Gastrocnemius medialis (tissue), 4 donors: ENCODE measurements at regions of chr6 and their contacts with region 1.

Region 1: DNA sequence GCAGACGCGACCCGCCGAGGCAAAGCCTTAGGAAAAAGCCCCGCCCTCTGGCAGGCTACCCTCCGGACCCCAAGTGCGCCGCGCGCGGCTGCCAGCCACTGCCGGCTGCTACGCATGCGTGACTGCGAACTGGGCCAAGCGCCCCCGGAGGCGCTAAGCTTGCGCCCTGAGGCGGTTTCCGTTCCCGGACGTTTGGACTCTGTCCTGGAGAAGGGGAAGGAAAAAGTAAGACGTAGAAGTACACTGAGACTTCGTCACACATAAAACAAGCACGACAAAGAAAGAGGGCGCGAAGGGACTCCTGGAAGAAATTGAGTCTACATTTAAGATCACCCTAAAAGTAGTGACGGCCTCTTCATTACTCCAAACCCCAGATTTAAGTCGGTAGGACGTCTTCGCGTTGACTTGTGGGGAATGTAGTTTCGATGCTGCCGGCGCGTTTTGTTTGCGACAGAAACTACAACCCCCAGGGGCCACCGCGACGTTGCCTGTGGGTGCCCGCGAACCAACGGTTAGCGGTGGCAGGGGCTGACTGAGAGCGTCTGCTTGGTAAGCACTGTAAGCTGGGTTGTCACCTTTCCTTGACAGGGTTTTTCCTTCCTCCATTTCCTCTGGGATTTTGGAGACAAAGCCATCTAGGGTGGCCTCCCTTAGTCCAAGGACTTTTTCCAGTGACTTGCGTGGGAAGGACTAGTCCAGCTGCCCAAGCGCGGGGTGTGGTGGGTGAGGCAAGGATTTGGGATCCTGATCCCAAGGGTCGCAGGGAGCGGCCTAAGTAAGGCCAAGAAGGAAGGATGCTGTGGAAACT is at the start of gene CEP57L1:
- DNase-seq: peak; percentile 96 to 97
- ATAC-seq: peak; percentile 75 to 81
- H3K4me3 ChIP-seq: peak within 1 kb of the TSS; percentile 67 to 90 (median 82)
- H3K27ac ChIP-seq: peak within 1 kb of the TSS; percentile 93 to 98 (median 96)
- H3K4me1 ChIP-seq: peaks cover 16 to 42% of the 10 kb centered on the region in 2 donors
- H3K27me3 ChIP-seq: no peaks in the 10 kb centered on the region
- CTCF ChIP-seq: peak in 1 of 5 experiments; percentile 27
- POLR2A ChIP-seq: no peak
- total RNA-seq, gene CEP57L1: 10.3 to 29.7 (median 17.5) TPM

Region 2: GRCh38 chr6:107674995-107675738 is 1420.1 kb before region 1 on chr6:
- in situ Hi-C with region 1: no loop called
- intact Hi-C with region 1: loop called (anchors 10 kb)
- DNase-seq: peak; percentile 73 to 74
- ATAC-seq: peak; percentile 86 to 93
- H3K4me3 ChIP-seq: peak overlapping the region; percentile 34 to 47 (median 38)
- H3K27ac ChIP-seq: peak overlapping the region; percentile 61 to 82 (median 76)
- H3K4me1 ChIP-seq: peaks cover 32 to 35% of the 10 kb centered on the region in 2 donors
- H3K27me3 ChIP-seq: no peaks in the 10 kb centered on the region
- CTCF ChIP-seq: peak; percentile 80 to 93 (median 90)
- POLR2A ChIP-seq: no peak

Region 3: GRCh38 chr6:108260809-108261569 is 834.2 kb before region 1 on chr6 and contains the start of gene SNX3:
- in situ Hi-C with region 1: no loop called
- intact Hi-C with region 1: loop called (anchors 10 kb)
- DNase-seq: peak; percentile 96 to 97
- ATAC-seq: peak; percentile 93 to 95
- H3K4me3 ChIP-seq: peak within 1 kb of the TSS; percentile 68 to 97 (median 90)
- H3K27ac ChIP-seq: peak within 1 kb of the TSS; percentile 96 to 99 (median 98)
- H3K4me1 ChIP-seq: peaks cover 30 to 31% of the 10 kb centered on the region in 2 donors
- H3K27me3 ChIP-seq: no peaks in the 10 kb centered on the region
- CTCF ChIP-seq: peak in 2 of 5 experiments; percentile 25 to 26
- POLR2A ChIP-seq: peak; percentile 88 to 94
- total RNA-seq, gene SNX3: 150 to 177 (median 168) TPM

Region 4: GRCh38 chr6:108655806-108656651 is 439.2 kb before region 1 on chr6:
- in situ Hi-C with region 1: loop called in 1 of 4 experiments (anchors 25 kb)
- intact Hi-C with region 1: no loop called
- DNase-seq: peak; percentile 52 to 69
- ATAC-seq: peak; percentile 37 to 60
- H3K4me3 ChIP-seq: peak overlapping the region; percentile 50 to 67 (median 62)
- H3K27ac ChIP-seq: peak overlapping the region; percentile 89 to 94 (median 92)
- H3K4me1 ChIP-seq: peaks cover 77 to 85% of the 10 kb centered on the region in 2 donors
- H3K27me3 ChIP-seq: no peaks in the 10 kb centered on the region
- CTCF ChIP-seq: no peak
- POLR2A ChIP-seq: peak; percentile 33 to 75

Region 5: GRCh38 chr6:109009236-109009961 is 85.8 kb before region 1 on chr6:
- in situ Hi-C with region 1: no loop called
- intact Hi-C with region 1: loop called (anchors 2 kb)
- DNase-seq: peak; percentile 87 to 92
- ATAC-seq: peak; percentile 85 to 86
- H3K4me3 ChIP-seq: peak overlapping the region; percentile 60 to 89 (median 78)
- H3K27ac ChIP-seq: peak overlapping the region; percentile 92 to 98 (median 95)
- H3K4me1 ChIP-seq: peaks cover 52 to 61% of the 10 kb centered on the region in 2 donors
- H3K27me3 ChIP-seq: no peaks in the 10 kb centered on the region
- CTCF ChIP-seq: peak; percentile 18 to 74 (median 53)
- POLR2A ChIP-seq: peak; percentile 82 to 97

Region 6: GRCh38 chr6:109117346-109118035 is 22.3 kb after region 1 on chr6:
- in situ Hi-C with region 1: no loop called
- intact Hi-C with region 1: no loop called
- DNase-seq: no peak
- ATAC-seq: peak in 1 of 2 donors; percentile 23
- H3K4me3 ChIP-seq: no peak overlapping the region
- H3K27ac ChIP-seq: no peak overlapping the region
- H3K4me1 ChIP-seq: peaks cover 26 to 46% of the 10 kb centered on the region in 2 donors
- H3K27me3 ChIP-seq: no peaks in the 10 kb centered on the region
- CTCF ChIP-seq: no peak
- POLR2A ChIP-seq: no peak

Region 7: DNA sequence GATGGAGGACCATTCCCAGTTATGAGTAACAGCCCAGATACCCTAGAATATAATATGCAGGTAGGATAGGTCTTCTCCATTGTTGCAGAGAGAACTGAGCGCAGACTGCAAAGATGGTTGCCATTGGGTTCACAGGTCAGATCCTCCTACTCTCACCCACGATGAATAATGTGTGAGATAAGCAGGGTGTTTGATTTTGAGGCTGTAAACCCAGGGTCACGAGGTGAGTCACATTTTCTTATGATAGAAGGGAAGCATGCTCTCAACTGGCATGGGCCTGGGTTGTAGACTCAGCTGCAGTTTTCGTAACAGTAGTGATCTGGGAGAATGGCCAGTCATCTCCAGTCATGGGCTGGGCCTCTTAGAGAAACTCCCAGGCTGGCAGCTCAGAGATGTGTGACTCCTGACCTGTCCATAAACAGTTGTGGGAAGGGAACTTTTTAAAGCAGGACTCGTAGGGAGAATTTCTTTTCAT is 212.8 kb after region 1 on chr6:
- in situ Hi-C with region 1: no loop called
- intact Hi-C with region 1: loop called (anchors 5 kb)
- DNase-seq: peak; percentile 73 to 80
- ATAC-seq: peak; percentile 67 to 69
- H3K4me3 ChIP-seq: no peak overlapping the region
- H3K27ac ChIP-seq: peak overlapping the region; percentile 44 to 91 (median 72)
- H3K4me1 ChIP-seq: peaks cover 21 to 38% of the 10 kb centered on the region in 2 donors
- H3K27me3 ChIP-seq: no peaks in the 10 kb centered on the region
- CTCF ChIP-seq: no peak
- POLR2A ChIP-seq: peak; percentile 40 to 45

Region 8: GRCh38 chr6:109482905-109483735 is 387.9 kb after region 1 on chr6 and contains the start of gene ZBTB24:
- in situ Hi-C with region 1: no loop called
- intact Hi-C with region 1: loop called (anchors 5 kb)
- DNase-seq: peak; percentile 82 to 88
- ATAC-seq: peak; percentile 83 to 87
- H3K4me3 ChIP-seq: peak within 1 kb of the TSS; percentile 66 to 100 (median 94)
- H3K27ac ChIP-seq: peak within 1 kb of the TSS; percentile 84 to 93 (median 88)
- H3K4me1 ChIP-seq: peaks cover 37 to 46% of the 10 kb centered on the region in 2 donors
- H3K27me3 ChIP-seq: no peaks in the 10 kb centered on the region
- CTCF ChIP-seq: no peak
- POLR2A ChIP-seq: peak; percentile 75 to 89
- total RNA-seq, gene ZBTB24: 3.7 to 10.5 (median 6.1) TPM